GM10248 (cell line): ENCODE measurements at regions of chr5 and their contacts with region 1.

Region 1: GRCh38 chr5:79464695-79465332 is 49.1 kb downstream of the HOMER1 start:
- DNase-seq: peak; percentile 45
- CTCF ChIP-seq: peak; percentile 58

Region 2: GRCh38 chr5:79448336-79448735 is 16.5 kb before region 1 on chr5:
- CTCF ChIA-PET with region 1: interaction called, 18 read pairs
- POLR2A ChIA-PET with region 1: no interaction called
- DNase-seq: no peak
- CTCF ChIP-seq: no peak

Region 3: DNA sequence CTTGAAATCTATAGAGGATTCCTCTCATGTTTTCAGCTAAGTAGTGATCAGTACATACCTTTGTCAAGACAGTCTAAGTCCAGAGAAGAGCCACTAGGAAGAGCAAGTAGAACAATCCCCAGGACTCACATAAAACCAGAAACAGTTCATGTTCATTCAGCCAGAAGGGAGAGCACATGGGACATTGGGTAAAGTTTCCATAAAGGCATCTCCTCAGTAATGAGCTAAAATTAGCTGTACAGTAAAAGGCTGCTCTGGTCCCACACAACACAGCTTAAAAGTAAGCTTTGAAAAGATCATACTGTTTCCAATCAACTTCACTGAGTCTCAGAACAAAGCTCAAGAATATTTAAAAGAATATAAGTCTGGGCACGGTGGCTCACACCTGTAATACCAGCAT is 16.8 kb after region 1 on chr5:
- CTCF ChIA-PET with region 1: interaction called, 11 read pairs
- POLR2A ChIA-PET with region 1: no interaction called
- DNase-seq: no peak
- CTCF ChIP-seq: no peak

Region 4: GRCh38 chr5:79567921-79568549 is 103.2 kb after region 1 on chr5:
- CTCF ChIA-PET with region 1: no interaction called
- POLR2A ChIA-PET with region 1: no interaction called
- DNase-seq: no peak
- CTCF ChIP-seq: no peak